Activated naive CD4-positive, alpha-beta T cell treated with anti-CD3 and anti-CD28 coated beads for 36 hours (primary cell): ENCODE measurements at regions of chr7 and their contacts with region 1.

Region 1: DNA sequence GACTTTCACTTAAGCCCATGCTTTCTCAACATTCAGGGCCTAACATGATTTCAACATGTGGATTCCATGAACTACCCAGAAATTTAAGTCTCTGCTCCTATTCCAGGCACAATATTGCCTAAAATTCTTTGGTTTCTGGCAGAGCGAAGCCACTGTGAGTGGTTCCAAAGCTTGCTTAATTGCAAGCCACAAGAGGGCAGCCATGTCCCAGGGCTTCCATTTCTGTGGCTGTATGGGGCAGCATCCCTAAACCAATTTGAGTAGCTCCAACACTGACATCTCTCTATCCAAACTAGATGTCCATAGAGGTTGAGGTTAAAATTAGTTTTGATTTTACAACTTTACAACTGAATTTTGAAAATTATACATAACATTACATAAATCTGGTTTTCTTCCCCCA is 56.3 kb upstream of the MDFIC start:
- DNase-seq: peak; percentile 80
- H3K4me3 Mint-ChIP-seq: no peak overlapping the region
- H3K27ac Mint-ChIP-seq: no peak overlapping the region
- H3K4me1 Mint-ChIP-seq: peaks cover 7% of the 10 kb centered on the region
- H3K27me3 Mint-ChIP-seq: no peaks in the 10 kb centered on the region

Region 2: DNA sequence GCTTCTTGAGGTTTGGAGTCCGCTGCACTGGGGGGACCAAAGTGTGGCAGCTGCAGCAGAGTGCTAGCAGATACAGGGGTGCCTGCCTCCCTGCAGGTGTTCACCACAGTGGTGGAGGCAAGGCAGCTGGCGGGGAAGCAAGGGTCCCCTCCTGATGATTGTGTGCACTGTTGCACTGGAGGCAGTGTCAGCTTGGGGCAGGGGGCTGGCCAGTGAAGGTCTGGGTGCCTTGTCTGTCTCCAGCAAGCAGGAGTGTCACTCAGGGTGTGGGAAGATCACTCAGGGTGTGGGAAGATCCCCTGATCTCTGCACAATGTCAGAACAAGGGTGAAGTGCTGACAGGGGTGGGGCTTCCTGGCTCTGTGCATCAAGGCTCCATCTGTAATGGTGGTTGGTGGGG is 910.4 kb before region 1 on chr7:
- CTCF ChIA-PET with region 1: no interaction called
- intact Hi-C with region 1: no loop called
- DNase-seq: no peak
- H3K4me3 Mint-ChIP-seq: no peak overlapping the region
- H3K27ac Mint-ChIP-seq: no peak overlapping the region
- H3K4me1 Mint-ChIP-seq: no peaks in the 10 kb centered on the region
- H3K27me3 Mint-ChIP-seq: no peaks in the 10 kb centered on the region

Region 3: GRCh38 chr7:114085592-114086501 is 779.7 kb before region 1 on chr7:
- CTCF ChIA-PET with region 1: no interaction called
- intact Hi-C with region 1: loop called (anchors 5 kb)
- DNase-seq: peak; percentile 40
- H3K4me3 Mint-ChIP-seq: peak overlapping the region; percentile 76
- H3K27ac Mint-ChIP-seq: no peak overlapping the region
- H3K4me1 Mint-ChIP-seq: peaks cover 40% of the 10 kb centered on the region
- H3K27me3 Mint-ChIP-seq: peaks cover 64% of the 10 kb centered on the region

Region 4: DNA sequence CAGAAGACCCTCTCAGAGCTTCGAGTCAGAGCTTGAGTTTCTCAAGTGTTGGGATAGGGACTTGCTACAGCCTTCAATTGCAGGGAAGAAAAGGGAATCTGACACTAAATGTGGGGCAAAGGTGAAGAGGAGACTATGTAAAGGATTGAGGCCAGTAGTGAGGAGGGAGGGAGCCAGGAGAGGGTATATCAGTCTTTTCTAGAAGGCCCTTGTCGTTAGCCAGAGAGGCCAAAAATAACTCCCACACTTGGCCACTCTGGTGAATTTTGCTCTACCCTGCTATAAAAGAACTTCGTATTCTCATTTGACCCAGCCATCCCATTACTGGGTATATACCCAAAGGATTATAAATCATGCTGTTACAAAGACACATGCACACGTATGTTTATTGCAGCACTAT is 218.4 kb after region 1 on chr7:
- CTCF ChIA-PET with region 1: no interaction called
- intact Hi-C with region 1: loop called (anchors 1 kb)
- DNase-seq: no peak
- H3K4me3 Mint-ChIP-seq: no peak overlapping the region
- H3K27ac Mint-ChIP-seq: no peak overlapping the region
- H3K4me1 Mint-ChIP-seq: no peaks in the 10 kb centered on the region
- H3K27me3 Mint-ChIP-seq: peaks cover 2% of the 10 kb centered on the region

Region 5: DNA sequence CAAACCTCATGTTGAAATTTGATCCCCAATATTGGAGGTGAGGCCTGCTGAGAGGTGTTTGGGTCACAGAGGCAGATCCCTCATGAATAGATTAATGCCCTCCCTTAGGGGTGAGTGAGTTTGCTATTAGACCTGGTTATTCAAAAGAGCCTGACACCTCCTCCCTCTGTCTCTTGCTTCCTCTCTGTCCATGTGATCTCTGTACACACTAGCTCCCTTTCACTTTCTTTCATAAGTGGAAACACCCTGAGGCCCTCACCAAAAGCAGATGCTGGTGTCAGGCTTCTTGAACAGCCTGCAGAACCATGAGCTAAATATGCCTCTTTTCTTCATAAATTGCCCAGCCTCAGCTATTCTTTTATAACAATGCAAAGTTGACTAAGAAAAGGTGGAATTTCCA is 503.4 kb after region 1 on chr7:
- CTCF ChIA-PET with region 1: interaction called, 3 read pairs
- intact Hi-C with region 1: loop called (anchors 5 kb)
- DNase-seq: no peak
- H3K4me3 Mint-ChIP-seq: no peak overlapping the region
- H3K27ac Mint-ChIP-seq: no peak overlapping the region
- H3K4me1 Mint-ChIP-seq: no peaks in the 10 kb centered on the region
- H3K27me3 Mint-ChIP-seq: no peaks in the 10 kb centered on the region

Region 6: GRCh38 chr7:115449689-115450088 is 584.1 kb after region 1 on chr7:
- CTCF ChIA-PET with region 1: no interaction called
- intact Hi-C with region 1: no loop called
- DNase-seq: no peak
- H3K4me3 Mint-ChIP-seq: no peak overlapping the region
- H3K27ac Mint-ChIP-seq: no peak overlapping the region
- H3K4me1 Mint-ChIP-seq: no peaks in the 10 kb centered on the region
- H3K27me3 Mint-ChIP-seq: peaks cover 14% of the 10 kb centered on the region

Region 7: GRCh38 chr7:115707258-115708012 is 841.9 kb after region 1 on chr7:
- CTCF ChIA-PET with region 1: no interaction called
- intact Hi-C with region 1: loop called (anchors 1 kb)
- DNase-seq: peak; percentile 22
- H3K4me3 Mint-ChIP-seq: no peak overlapping the region
- H3K27ac Mint-ChIP-seq: no peak overlapping the region
- H3K4me1 Mint-ChIP-seq: no peaks in the 10 kb centered on the region
- H3K27me3 Mint-ChIP-seq: no peaks in the 10 kb centered on the region

Region 8: GRCh38 chr7:116122972-116123595 is 1257.5 kb after region 1 on chr7:
- CTCF ChIA-PET with region 1: no interaction called
- intact Hi-C with region 1: loop called (anchors 5 kb)
- DNase-seq: peak; percentile 6
- H3K4me3 Mint-ChIP-seq: no peak overlapping the region
- H3K27ac Mint-ChIP-seq: no peak overlapping the region
- H3K4me1 Mint-ChIP-seq: no peaks in the 10 kb centered on the region
- H3K27me3 Mint-ChIP-seq: peaks cover 14% of the 10 kb centered on the region